Common myeloid progenitor, CD34-positive (primary cell): ENCODE measurements at regions of chr11 and their contacts with region 1.

Region 1: DNA sequence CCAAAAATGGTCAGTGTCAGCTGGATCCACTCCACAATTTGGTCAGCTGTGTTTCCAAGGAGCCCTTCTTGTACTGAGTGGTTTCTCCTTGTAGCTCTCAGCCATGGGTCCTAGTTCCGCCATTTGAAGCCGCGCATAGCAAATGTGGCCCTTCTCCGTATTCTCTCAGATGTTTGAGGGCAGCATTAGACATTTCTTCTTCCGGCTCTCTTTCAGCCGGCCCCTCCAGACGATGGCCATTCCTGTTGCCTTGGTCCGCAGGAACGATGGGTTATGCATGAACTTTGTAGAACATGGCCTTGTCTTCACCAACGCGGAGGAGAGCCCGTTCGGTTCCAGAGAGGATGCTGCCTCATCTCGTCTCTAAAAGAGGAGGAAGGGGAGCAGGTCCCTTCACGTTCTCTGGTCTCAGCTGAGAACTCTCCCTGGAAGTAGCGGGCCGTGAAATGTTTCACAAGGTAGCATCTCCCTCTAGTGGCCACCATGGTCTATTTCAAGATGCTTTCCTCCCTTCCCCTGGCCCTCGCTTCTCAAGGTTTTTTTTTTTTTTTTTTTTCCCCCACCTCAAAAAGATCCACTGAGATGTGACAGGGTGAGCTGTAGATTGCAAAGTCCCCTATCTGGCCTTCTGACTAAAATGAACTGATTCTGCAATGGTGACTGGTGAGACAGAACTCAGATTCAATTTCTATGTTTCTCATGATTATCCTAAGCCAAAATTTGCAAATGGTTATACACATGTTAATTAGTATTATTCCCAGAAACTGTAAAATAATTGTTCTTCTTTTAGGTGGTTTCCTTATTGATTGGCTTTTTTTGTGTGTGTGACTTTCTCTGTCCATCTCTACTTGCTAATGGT is 19.8 kb upstream of the PLET1 start:
- DNase-seq: peak; percentile 89 to 92 (median 91)
- H3K4me3 ChIP-seq: peak overlapping the region; percentile 32 to 91 (median 72)
- H3K27ac ChIP-seq: no peak overlapping the region
- H3K4me1 ChIP-seq: peaks cover 0 to 36% (median 19%) of the 10 kb centered on the region in 4 experiments
- H3K27me3 ChIP-seq: no peaks in the 10 kb centered on the region

Region 2: GRCh38 chr11:112182867-112183266 is 97.6 kb before region 1 on chr11:
- CTCF ChIA-PET with region 1: no interaction called
- POLR2A ChIA-PET with region 1: no interaction called
- DNase-seq: no peak
- H3K4me3 ChIP-seq: no peak overlapping the region
- H3K27ac ChIP-seq: no peak overlapping the region
- H3K4me1 ChIP-seq: peaks cover 16 to 38% (median 22%) of the 10 kb centered on the region in 4 experiments
- H3K27me3 ChIP-seq: no peaks in the 10 kb centered on the region

Region 3: DNA sequence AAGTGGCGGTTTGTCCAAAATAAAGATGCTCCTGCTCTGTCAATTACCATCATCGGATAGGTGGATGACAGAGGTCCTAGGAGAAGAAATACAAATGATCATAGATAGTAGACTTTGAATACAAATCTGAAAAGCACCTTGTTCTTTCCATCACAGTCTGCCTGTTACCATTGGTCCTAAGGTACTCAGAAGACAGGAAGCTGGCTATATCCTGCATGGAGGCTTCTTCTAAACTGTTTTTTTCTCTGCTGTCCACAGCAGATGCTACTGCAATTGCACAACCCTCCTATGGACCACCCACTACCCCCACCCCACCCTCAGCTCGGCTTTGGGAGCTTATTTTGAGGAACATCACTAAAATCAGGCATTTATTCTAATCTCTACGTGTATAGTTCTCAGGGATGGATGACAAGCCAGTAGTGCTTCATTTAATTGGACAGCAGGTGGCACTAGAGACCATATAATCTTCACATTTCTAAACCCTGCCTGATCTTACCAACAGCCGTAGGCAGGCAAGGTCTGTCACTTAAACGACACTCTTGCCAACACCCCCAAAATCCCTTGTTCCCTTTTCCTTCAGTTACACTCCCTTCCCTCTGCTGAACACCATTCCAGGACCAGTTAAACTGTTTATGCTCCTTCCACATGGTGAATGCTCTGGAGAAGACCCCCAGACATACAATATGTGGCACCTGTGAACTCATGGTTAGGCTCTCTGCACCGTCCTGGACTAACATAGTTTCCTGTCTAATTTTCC is 60.8 kb before region 1 on chr11:
- CTCF ChIA-PET with region 1: interaction called, 246 read pairs
- POLR2A ChIA-PET with region 1: interaction called, 3 read pairs
- DNase-seq: peak; percentile 82 to 92 (median 88)
- H3K4me3 ChIP-seq: no peak overlapping the region
- H3K27ac ChIP-seq: no peak overlapping the region
- H3K4me1 ChIP-seq: peaks cover 0 to 15% (median 4%) of the 10 kb centered on the region in 4 experiments
- H3K27me3 ChIP-seq: peaks cover 0 to 2% (median 0%) of the 10 kb centered on the region in 5 experiments

Region 4: GRCh38 chr11:112255067-112255720 is 25.3 kb before region 1 on chr11:
- CTCF ChIA-PET with region 1: interaction called, 12 read pairs
- POLR2A ChIA-PET with region 1: no interaction called
- DNase-seq: peak; percentile 28 to 40 (median 29)
- H3K4me3 ChIP-seq: peak overlapping the region in 2 of 7 experiments; percentile 7 to 37
- H3K27ac ChIP-seq: no peak overlapping the region
- H3K4me1 ChIP-seq: peaks cover 0 to 12% (median 3%) of the 10 kb centered on the region in 4 experiments
- H3K27me3 ChIP-seq: no peaks in the 10 kb centered on the region

Region 5: GRCh38 chr11:112265721-112266409 is 14.6 kb before region 1 on chr11:
- CTCF ChIA-PET with region 1: interaction called, 39 read pairs
- POLR2A ChIA-PET with region 1: no interaction called
- DNase-seq: no peak
- H3K4me3 ChIP-seq: no peak overlapping the region
- H3K27ac ChIP-seq: no peak overlapping the region
- H3K4me1 ChIP-seq: no peaks in the 10 kb centered on the region
- H3K27me3 ChIP-seq: no peaks in the 10 kb centered on the region

Region 6: GRCh38 chr11:112555491-112556364 is 275.2 kb after region 1 on chr11:
- CTCF ChIA-PET with region 1: interaction called, 25 read pairs
- POLR2A ChIA-PET with region 1: no interaction called
- DNase-seq: peak; percentile 50 to 77 (median 73)
- H3K4me3 ChIP-seq: no peak overlapping the region
- H3K27ac ChIP-seq: no peak overlapping the region
- H3K4me1 ChIP-seq: no peaks in the 10 kb centered on the region
- H3K27me3 ChIP-seq: no peaks in the 10 kb centered on the region